MCF 10A (cell line): ENCODE measurements at regions of chr3 and their contacts with region 1.

Region 1: DNA sequence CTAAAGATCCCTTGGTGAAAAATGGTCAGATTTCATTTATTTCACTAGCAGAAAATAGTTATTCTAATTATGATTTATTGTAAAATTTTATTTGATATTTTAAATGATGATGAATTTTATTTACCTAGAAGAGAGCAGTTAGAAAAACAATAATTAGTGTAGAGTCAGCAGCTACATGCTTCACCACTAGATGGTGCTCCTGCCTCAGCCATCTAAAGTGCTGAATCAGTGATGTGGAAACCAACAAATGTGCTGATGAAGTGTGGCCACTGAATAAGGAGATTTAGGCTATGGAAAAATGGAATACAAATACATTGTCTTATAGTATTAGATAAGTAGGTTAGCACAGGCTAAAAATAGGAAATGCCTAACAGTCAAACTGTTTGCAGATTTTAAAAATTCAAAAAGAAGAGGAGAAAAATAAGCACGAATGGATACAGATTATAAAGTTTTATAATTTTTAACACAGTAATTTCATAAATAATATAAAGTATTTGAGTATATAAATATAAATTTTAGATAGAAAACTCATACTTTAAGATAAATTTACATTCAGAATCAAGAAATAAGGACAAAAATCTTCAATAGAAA is 109.8 kb downstream of the PPP2R3A start:
- DNase-seq: peak; percentile 86
- H3K4me3 Mint-ChIP-seq: no peak overlapping the region
- H3K27ac Mint-ChIP-seq: peak overlapping the region; percentile 8
- H3K4me1 Mint-ChIP-seq: peaks cover 22% of the 10 kb centered on the region
- H3K27me3 Mint-ChIP-seq: no peaks in the 10 kb centered on the region
- CTCF ChIP-seq: peak; percentile 86

Region 2: DNA sequence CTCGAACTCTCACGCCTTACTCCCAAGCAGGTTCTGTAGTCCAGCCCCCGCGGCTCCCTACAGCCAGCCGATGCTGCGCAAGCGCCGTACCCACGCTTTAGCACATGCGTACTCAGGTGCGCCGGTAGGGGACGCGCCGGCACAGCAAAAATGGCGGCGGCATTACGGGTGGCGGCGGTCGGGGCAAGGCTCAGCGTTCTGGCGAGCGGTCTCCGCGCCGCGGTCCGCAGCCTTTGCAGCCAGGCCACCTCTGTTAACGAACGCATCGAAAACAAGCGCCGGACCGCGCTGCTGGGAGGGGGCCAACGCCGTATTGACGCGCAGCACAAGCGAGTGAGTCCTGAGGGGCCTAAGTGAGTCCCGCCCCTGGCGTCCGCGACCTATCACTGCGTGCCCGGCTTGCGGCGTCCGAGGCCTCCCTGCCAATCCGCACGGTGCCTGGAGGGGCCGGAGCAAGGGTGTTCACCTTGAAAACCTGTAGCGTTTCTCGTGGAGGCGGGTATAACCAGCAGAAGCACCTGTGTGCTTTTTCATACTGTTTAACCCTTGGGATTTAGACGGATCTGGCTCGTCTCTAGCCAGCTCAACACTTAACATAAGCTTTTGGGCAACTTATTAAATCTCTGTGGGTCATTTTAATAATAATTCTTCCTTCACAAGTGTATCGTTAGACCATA is 175.1 kb after region 1 on chr3 and contains the start of gene PCCB:
- CTCF ChIA-PET with region 1: interaction called, 4 read pairs
- POLR2A ChIA-PET with region 1: no interaction called
- intact Hi-C with region 1: loop called (anchors 1 kb)
- DNase-seq: peak; percentile 94
- H3K4me3 Mint-ChIP-seq: peak within 1 kb of the TSS; percentile 81
- H3K27ac Mint-ChIP-seq: peak within 1 kb of the TSS; percentile 67
- H3K4me1 Mint-ChIP-seq: peaks cover 17% of the 10 kb centered on the region
- H3K27me3 Mint-ChIP-seq: no peaks in the 10 kb centered on the region
- CTCF ChIP-seq: peak; percentile 65
- total RNA-seq, gene PCCB: 51.7 and 54.0 TPM in 2 replicates

Region 3: GRCh38 chr3:136305878-136306277 is 230.6 kb after region 1 on chr3:
- CTCF ChIA-PET with region 1: interaction called, 4 read pairs
- POLR2A ChIA-PET with region 1: no interaction called
- intact Hi-C with region 1: loop called (anchors 1 kb)
- DNase-seq: peak; percentile 63
- H3K4me3 Mint-ChIP-seq: no peak overlapping the region
- H3K27ac Mint-ChIP-seq: no peak overlapping the region
- H3K4me1 Mint-ChIP-seq: no peaks in the 10 kb centered on the region
- H3K27me3 Mint-ChIP-seq: no peaks in the 10 kb centered on the region
- CTCF ChIP-seq: peak; percentile 39

Region 4: DNA sequence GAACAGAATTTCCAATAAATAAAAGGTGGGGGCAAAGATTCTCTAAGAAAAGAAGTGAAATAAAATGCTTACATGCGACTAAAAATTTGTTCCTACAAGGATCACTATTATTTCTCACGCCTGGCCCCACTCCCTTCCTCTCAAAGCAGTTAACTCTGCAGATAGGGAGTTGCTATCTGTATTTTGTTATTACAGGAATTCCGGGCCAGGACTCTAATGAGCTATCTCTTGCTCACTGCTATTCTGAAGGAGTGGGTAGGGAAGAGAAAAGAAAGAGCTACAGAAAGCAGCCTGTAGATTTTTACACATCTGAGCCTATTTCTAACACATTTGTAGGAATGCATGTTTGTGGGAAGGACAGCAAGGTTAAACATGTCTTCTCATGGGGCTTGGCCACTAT is 315.3 kb after region 1 on chr3:
- CTCF ChIA-PET with region 1: interaction called, 18 read pairs
- POLR2A ChIA-PET with region 1: no interaction called
- intact Hi-C with region 1: loop called (anchors 1 kb)
- DNase-seq: no peak
- H3K4me3 Mint-ChIP-seq: no peak overlapping the region
- H3K27ac Mint-ChIP-seq: no peak overlapping the region
- H3K4me1 Mint-ChIP-seq: no peaks in the 10 kb centered on the region
- H3K27me3 Mint-ChIP-seq: no peaks in the 10 kb centered on the region
- CTCF ChIP-seq: no peak

Region 5: GRCh38 chr3:136545664-136546268 is 470.5 kb after region 1 on chr3:
- CTCF ChIA-PET with region 1: no interaction called
- POLR2A ChIA-PET with region 1: no interaction called
- intact Hi-C with region 1: loop called (anchors 5 kb)
- DNase-seq: peak; percentile 20
- H3K4me3 Mint-ChIP-seq: no peak overlapping the region
- H3K27ac Mint-ChIP-seq: no peak overlapping the region
- H3K4me1 Mint-ChIP-seq: peaks cover 29% of the 10 kb centered on the region
- H3K27me3 Mint-ChIP-seq: no peaks in the 10 kb centered on the region
- CTCF ChIP-seq: peak; percentile 28

Region 6: DNA sequence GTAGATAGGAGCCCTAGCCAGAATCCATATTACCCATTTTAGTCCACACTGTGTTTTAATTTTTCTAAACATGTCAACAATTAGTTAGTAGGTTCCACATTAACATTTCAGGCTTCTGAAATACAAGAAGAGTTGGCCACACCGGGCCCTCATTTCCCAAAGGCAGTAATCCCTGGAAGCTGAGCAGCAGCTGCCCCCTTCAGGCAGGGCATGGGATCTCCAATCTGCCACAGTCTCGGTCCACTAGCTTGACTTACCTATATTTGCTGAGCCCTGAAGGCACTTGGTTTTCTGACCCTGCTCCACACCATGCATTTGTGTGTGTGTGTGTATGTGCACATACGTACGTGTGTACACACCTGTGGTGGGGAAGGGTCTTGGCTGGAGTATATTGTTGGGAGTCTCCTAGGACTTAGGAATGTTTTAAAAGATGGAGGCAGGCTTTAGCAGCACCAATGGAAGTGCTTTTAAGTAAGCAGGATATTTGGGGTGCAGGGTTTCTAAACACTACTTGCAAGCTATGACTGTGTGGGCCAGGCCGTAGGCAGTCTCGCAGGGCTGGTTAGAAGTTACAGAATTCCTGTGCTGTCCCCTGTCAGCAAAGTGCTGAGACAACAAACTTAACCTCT is 1617.6 kb after region 1 on chr3:
- CTCF ChIA-PET with region 1: no interaction called
- POLR2A ChIA-PET with region 1: no interaction called
- intact Hi-C with region 1: loop called (anchors 10 kb)
- DNase-seq: peak; percentile 55
- H3K4me3 Mint-ChIP-seq: no peak overlapping the region
- H3K27ac Mint-ChIP-seq: no peak overlapping the region
- H3K4me1 Mint-ChIP-seq: no peaks in the 10 kb centered on the region
- H3K27me3 Mint-ChIP-seq: peaks cover 36% of the 10 kb centered on the region
- CTCF ChIP-seq: peak; percentile 57